Uterus (tissue), 4 donors: ENCODE measurements at regions of chr5 and their contacts with region 1.

Region 1: DNA sequence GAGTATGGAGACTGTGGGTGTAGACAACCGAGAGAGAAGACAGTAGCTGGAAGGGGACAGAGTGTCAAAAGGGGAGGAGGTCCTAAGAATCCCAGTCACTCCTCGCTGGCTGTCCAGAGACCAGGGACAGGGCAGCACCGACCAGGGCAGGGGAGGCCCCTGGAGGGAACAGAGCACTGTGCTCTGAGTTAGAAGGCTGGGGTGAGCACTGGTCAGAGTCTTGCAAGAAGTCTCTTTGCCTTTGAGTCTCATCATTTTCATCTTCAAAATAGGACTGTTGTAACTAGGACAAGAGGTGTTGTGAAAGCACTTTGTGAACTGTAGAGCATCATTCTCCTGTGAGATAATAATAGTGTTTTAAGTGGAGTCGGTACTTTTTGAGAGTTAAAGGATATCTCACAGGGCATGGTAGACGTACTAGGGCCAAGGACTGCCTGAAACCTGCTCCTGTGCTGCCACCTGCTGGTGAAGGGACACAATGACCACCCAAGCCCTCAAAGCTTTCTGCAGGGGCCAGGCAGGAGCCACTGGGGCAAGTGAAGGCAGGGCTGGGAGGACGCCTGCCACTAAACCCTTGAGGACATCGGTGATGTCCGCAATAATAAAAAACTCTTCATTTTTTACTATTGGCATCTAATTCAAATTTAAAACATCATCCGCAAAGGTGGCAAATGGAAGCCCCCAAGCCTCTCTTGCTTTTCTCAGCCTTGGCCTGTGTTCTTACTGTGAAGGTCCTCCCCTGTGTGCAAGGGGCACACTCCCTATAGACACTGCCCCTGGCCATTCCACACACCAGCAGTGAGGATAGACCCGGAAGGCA is 28.2 kb downstream of the SLC6A7 start:
- DNase-seq: peak; percentile 87 to 88
- H3K4me3 ChIP-seq: no peak overlapping the region
- H3K27ac ChIP-seq: no peak overlapping the region
- H3K4me1 ChIP-seq: no peaks in the 10 kb centered on the region
- H3K27me3 ChIP-seq: no peaks in the 10 kb centered on the region
- CTCF ChIP-seq: peak; percentile 91 to 97 (median 95)
- POLR2A ChIP-seq: no peak

Region 2: GRCh38 chr5:150129813-150130492 is 88.1 kb before region 1 on chr5:
- intact Hi-C with region 1: loop called (anchors 5 kb)
- DNase-seq: peak; percentile 85 to 87
- H3K4me3 ChIP-seq: no peak overlapping the region
- H3K27ac ChIP-seq: peak overlapping the region; percentile 59 to 99
- H3K4me1 ChIP-seq: peaks cover 0 to 40% of the 10 kb centered on the region in 2 donors
- H3K27me3 ChIP-seq: no peaks in the 10 kb centered on the region
- CTCF ChIP-seq: peak; percentile 92 to 97 (median 94)
- POLR2A ChIP-seq: no peak

Region 3: GRCh38 chr5:150161242-150162141 is 56.6 kb before region 1 on chr5:
- intact Hi-C with region 1: loop called (anchors 10 kb)
- DNase-seq: peak; percentile 86 to 89
- H3K4me3 ChIP-seq: no peak overlapping the region
- H3K27ac ChIP-seq: peak overlapping the region; percentile 97 to 99
- H3K4me1 ChIP-seq: peaks cover 0 to 18% of the 10 kb centered on the region in 2 donors
- H3K27me3 ChIP-seq: no peaks in the 10 kb centered on the region
- CTCF ChIP-seq: peak; percentile 88 to 94 (median 90)
- POLR2A ChIP-seq: no peak